Sigmoid colon (tissue), 7 donors: ENCODE measurements at regions of chr16 and their contacts with region 1.

Region 1: GRCh38 chr16:67660564-67661028 is at the start of gene PARD6A:
- DNase-seq: peak; percentile 99
- H3K4me3 ChIP-seq: peak within 1 kb of the TSS; percentile 65 to 94 (median 80)
- H3K27ac ChIP-seq: peak within 1 kb of the TSS; percentile 92 to 96 (median 96)
- H3K4me1 ChIP-seq: peaks cover 0 to 29% (median 26%) of the 10 kb centered on the region in 4 donors
- H3K27me3 ChIP-seq: peaks cover 0 to under 1% (median 0%) of the 10 kb centered on the region in 3 donors
- CTCF ChIP-seq: no peak
- EP300 ChIP-seq: peak in 1 of 4 donors; percentile 42
- POLR2A ChIP-seq: no peak
- total RNA-seq, gene PARD6A: 12.8 to 16.6 (median 14.0) TPM

Region 2: GRCh38 chr16:67528222-67528869 is 132.2 kb before region 1 on chr16 and contains the start of gene RIPOR1:
- intact Hi-C with region 1: loop called (anchors 2 kb)
- DNase-seq: peak; percentile 83
- H3K4me3 ChIP-seq: peak within 1 kb of the TSS; percentile 60 to 98 (median 76)
- H3K27ac ChIP-seq: peak within 1 kb of the TSS; percentile 86 to 97 (median 94)
- H3K4me1 ChIP-seq: peaks cover 0 to 38% (median 24%) of the 10 kb centered on the region in 4 donors
- H3K27me3 ChIP-seq: no peaks in the 10 kb centered on the region
- CTCF ChIP-seq: no peak
- EP300 ChIP-seq: no peak
- POLR2A ChIP-seq: no peak
- total RNA-seq, gene RIPOR1: 23.9 to 60.9 (median 35.2) TPM